IMR-90 (cell line): ENCODE measurements at regions of chr11 and their contacts with region 1.

Region 1: DNA sequence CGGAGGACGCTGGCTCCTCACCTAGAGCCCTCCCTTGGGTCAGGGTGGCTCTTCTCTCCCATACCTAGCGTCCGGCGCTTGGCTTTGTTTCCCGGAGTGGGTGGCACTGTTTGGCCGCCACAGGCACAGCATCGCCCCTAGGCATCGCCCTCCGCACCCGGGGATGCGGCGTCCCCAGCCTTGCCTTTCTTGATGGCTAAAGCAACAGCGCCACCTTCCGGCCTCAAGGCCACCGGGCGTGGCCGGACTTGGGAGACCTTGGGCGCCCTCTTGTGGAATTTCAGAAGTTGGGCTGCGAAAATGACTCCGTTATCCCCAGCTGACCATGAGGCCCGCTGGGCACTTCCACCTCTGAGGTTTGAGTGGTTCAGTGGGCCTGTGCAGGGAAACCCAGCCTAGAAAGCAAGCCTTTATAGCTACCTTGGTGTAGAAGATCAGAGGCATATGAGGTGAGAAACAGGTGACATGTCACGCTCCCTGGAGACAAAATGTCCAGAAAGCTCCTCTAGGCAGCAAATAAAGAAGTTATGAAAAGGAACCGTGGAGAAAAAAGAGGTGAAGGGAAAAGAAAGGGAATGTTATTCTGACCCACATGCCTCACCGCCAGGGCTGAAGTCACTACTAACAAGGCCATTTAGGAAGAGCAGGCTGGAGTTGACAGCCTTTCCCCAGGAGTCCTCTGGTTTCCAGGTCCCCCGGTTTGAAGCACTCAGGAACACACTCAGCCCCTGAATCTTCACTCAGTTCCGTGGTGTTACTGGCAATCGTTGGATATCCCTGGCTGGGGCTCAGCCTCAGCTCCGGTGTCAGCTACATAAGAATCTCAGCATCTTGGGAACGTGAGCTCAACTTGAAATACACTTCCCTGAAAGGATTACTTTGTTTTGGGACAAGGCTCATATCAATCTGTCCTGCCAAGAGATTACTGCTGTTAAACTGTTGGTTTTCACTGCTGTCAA is 54.1 kb downstream of the SNX19 start:
- DNase-seq: peak; percentile 93
- ATAC-seq: peak; percentile 87
- H3K4me3 ChIP-seq: no peak overlapping the region
- H3K27ac ChIP-seq: no peak overlapping the region
- H3K4me1 ChIP-seq: peaks cover 4% of the 10 kb centered on the region; the same call in 1 of the 2 replicates
- H3K27me3 ChIP-seq: no peaks in the 10 kb centered on the region
- CTCF ChIP-seq: peak; percentile 100; the same call in 1 of the 2 replicates
- POLR2A ChIP-seq: peak; percentile 71
- RAD21 ChIP-seq: peak; percentile 100

Region 2: DNA sequence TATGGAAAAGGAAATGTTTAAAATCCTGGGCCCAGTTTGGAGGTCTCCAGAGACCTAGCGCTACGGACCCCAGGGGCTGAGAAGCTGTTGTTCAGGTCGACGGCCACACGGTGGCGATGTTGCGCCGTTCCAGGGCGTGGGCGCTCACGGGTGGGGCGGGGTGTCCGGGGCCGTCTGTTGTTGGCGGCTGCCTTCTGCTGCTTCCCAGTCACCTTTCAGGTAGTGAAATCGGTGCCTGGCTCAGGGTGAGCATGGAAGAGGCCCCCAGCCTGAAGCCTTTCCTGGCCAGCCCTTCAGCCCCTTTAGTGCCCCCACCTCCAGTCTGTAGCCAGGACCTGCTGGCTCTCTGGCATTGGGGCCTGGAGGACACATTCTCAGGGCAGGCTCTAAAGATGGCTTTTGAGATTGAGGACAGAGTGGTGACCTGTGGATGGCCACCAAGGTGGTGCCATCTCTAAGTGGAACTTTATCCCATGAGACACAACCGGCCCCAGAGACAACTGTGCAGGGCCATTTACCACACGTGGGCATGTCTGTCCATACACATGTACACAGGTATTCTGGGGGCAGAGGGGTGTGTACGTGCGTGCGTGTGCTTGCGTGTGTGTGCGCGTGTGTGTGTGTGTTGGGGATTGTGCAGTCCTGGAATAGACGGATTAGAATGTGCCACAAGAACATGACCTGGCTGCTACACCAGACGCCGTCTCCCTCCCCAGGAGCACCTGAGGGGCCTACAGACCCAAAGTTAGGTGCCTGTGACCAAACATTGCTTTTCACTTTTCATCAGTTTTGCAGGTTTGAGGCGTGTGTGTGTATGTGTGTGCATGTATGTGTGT is 648.8 kb before region 1 on chr11:
- CTCF ChIA-PET with region 1: interaction called, 4 read pairs
- POLR2A ChIA-PET with region 1: no interaction called
- dilution Hi-C with region 1: no loop called
- in situ Hi-C with region 1: loop called (anchors 10 kb)
- intact Hi-C with region 1: loop called (anchors 10 kb)
- DNase-seq: peak; percentile 6
- ATAC-seq: peak; percentile 96
- H3K4me3 ChIP-seq: no peak overlapping the region
- H3K27ac ChIP-seq: no peak overlapping the region
- H3K4me1 ChIP-seq: no peaks in the 10 kb centered on the region
- H3K27me3 ChIP-seq: peaks cover 46% of the 10 kb centered on the region
- CTCF ChIP-seq: peak; percentile 87
- POLR2A ChIP-seq: no peak
- RAD21 ChIP-seq: peak; percentile 91

Region 3: GRCh38 chr11:130390071-130390758 is 472.0 kb before region 1 on chr11:
- CTCF ChIA-PET with region 1: interaction called, 8 read pairs
- POLR2A ChIA-PET with region 1: no interaction called
- dilution Hi-C with region 1: no loop called
- in situ Hi-C with region 1: no loop called
- intact Hi-C with region 1: loop called (anchors 1 kb)
- DNase-seq: peak; percentile 99
- ATAC-seq: peak; percentile 88
- H3K4me3 ChIP-seq: no peak overlapping the region
- H3K27ac ChIP-seq: peak overlapping the region; percentile 68; the same call in 1 of the 2 replicates
- H3K4me1 ChIP-seq: peaks cover 12% of the 10 kb centered on the region
- H3K27me3 ChIP-seq: peaks cover 32% of the 10 kb centered on the region
- CTCF ChIP-seq: peak; percentile 89
- POLR2A ChIP-seq: 0 out of 2 replicates have a peak, but pooled peaks have one; percentile 29
- RAD21 ChIP-seq: peak; percentile 86

Region 4: GRCh38 chr11:130666781-130667251 is 195.4 kb before region 1 on chr11:
- CTCF ChIA-PET with region 1: no interaction called
- POLR2A ChIA-PET with region 1: no interaction called
- dilution Hi-C with region 1: no loop called
- in situ Hi-C with region 1: no loop called
- intact Hi-C with region 1: loop called (anchors 2 kb)
- DNase-seq: peak; percentile 51
- ATAC-seq: peak; percentile 86
- H3K4me3 ChIP-seq: no peak overlapping the region
- H3K27ac ChIP-seq: peak overlapping the region; percentile 93
- H3K4me1 ChIP-seq: peaks cover 6% of the 10 kb centered on the region
- H3K27me3 ChIP-seq: no peaks in the 10 kb centered on the region; the same call in 1 of the 2 replicates
- CTCF ChIP-seq: peak; percentile 38
- POLR2A ChIP-seq: no peak
- RAD21 ChIP-seq: peak; percentile 44

Region 5: DNA sequence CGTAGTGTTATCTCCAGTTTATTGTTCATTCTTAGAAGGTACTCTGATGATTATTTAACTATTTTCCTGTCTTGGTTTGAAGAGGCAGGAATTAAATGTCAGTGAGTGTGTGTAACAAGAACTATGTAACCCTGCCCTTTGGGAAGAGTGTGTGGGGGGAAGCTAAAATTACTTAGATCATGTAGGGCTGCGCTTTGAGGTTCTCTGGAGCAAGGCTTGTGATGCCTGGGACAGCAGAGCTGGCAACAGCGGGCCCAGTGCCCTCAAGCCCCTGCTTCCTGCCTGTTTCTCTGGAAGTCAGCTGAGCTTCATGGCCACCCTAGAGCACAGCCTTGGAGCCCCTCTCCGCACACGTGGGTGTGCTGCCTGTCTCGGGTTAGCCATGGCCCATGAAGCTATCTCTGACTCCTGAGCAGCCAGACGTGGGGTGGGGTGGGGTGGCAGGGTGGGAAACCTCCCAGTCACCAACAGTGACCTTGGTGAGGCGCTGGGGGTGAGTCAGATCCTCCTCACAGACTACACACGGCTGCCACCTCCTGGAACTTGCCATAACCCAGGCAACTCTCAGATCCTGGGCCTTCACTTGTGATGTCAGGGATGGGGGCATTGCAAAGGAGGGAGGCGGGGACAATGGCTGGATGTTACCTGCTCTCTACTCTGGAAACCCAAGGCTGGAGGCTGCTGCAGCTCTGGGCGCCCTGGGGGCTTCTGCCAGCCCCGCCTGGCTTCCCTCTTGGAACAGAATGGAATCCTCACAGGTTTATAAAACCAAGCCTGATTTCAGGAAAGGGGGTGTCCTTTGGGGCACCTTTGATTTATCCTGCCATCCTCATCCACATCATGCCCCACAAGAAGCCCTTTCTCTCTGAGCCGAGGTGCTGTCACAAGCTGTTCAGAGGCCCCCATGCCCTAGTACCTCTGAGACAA is 34.5 kb before region 1 on chr11:
- CTCF ChIA-PET with region 1: interaction called, 18 read pairs
- POLR2A ChIA-PET with region 1: no interaction called
- dilution Hi-C with region 1: no loop called
- in situ Hi-C with region 1: no loop called
- intact Hi-C with region 1: loop called (anchors 2 kb)
- DNase-seq: peak; percentile 82
- ATAC-seq: peak; percentile 97
- H3K4me3 ChIP-seq: no peak overlapping the region
- H3K27ac ChIP-seq: peak overlapping the region; percentile 77
- H3K4me1 ChIP-seq: peaks cover 14% of the 10 kb centered on the region
- H3K27me3 ChIP-seq: peaks cover 6% of the 10 kb centered on the region
- CTCF ChIP-seq: peak; percentile 73
- POLR2A ChIP-seq: no peak
- RAD21 ChIP-seq: peak; percentile 91

Region 6: GRCh38 chr11:130832566-130833425 is 29.4 kb before region 1 on chr11:
- CTCF ChIA-PET with region 1: interaction called, 18 read pairs
- POLR2A ChIA-PET with region 1: no interaction called
- dilution Hi-C with region 1: no loop called
- in situ Hi-C with region 1: no loop called
- intact Hi-C with region 1: loop called (anchors 1 kb)
- DNase-seq: peak; percentile 53
- ATAC-seq: peak; percentile 58
- H3K4me3 ChIP-seq: no peak overlapping the region
- H3K27ac ChIP-seq: peak overlapping the region; percentile 44; the same call in 1 of the 2 replicates
- H3K4me1 ChIP-seq: peaks cover 4% of the 10 kb centered on the region
- H3K27me3 ChIP-seq: no peaks in the 10 kb centered on the region; the same call in 1 of the 2 replicates
- CTCF ChIP-seq: no peak
- POLR2A ChIP-seq: no peak
- RAD21 ChIP-seq: no peak

Region 7: DNA sequence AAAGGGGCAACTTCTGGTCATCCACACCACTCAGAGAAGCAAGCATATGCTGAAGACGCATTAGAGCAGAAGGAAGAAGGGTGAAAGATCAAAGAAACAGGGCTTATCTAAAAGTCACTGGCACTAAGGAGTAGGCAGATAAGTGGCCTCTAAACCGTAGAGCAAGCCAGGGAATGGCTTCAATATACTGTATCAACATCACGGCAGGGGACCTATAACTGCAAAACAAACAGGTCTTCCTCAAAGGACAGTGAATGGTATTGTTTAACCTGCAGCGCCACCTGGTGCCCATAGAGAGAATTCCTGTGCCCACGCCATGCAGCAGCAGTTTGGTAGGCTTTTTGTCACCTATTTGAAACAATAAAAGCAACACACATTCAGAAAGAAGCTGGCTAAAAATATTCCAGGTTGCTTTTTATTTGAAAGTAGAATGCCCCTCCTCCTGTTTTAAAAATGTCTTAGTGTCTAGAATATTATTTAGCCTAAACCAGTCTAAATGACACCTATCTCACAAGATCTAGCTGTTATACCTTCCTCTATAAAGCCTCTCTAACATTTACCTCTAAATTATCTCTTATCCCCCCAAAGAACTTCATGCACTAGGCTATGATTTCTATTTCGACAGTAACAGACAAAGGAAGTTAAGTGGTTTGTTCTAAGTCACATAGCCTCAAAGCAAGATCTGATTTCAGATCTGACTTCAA is 32.3 kb after region 1 on chr11:
- CTCF ChIA-PET with region 1: interaction called, 3 read pairs
- POLR2A ChIA-PET with region 1: no interaction called
- dilution Hi-C with region 1: no loop called
- in situ Hi-C with region 1: no loop called
- intact Hi-C with region 1: loop called (anchors 2 kb)
- DNase-seq: peak; percentile 77
- ATAC-seq: peak; percentile 40
- H3K4me3 ChIP-seq: no peak overlapping the region
- H3K27ac ChIP-seq: peak overlapping the region; percentile 19; the same call in 1 of the 2 replicates
- H3K4me1 ChIP-seq: peaks cover 20% of the 10 kb centered on the region
- H3K27me3 ChIP-seq: no peaks in the 10 kb centered on the region
- CTCF ChIP-seq: peak; percentile 86
- POLR2A ChIP-seq: no peak
- RAD21 ChIP-seq: peak; percentile 85